ENCODE measurements at regions of chr12 and their contacts with region 1.

Region 1: GRCh38 chr12:74111688-74112360 is 425.8 kb upstream of the ATXN7L3B start:
- DNase-seq: peak; percentile 63
- H3K4me3 Mint-ChIP-seq: no peak overlapping the region
- H3K27ac Mint-ChIP-seq: no peak overlapping the region
- H3K4me1 Mint-ChIP-seq: peaks cover 7% of the 10 kb centered on the region
- H3K27me3 Mint-ChIP-seq: no peaks in the 10 kb centered on the region
- CTCF ChIP-seq: peak; percentile 37

Region 2: GRCh38 chr12:74317078-74317601 is 205.3 kb after region 1 on chr12:
- CTCF ChIA-PET with region 1: interaction called, 5 read pairs
- POLR2A ChIA-PET with region 1: no interaction called
- intact Hi-C with region 1: loop called (anchors 2 kb)
- DNase-seq: peak; percentile 62
- H3K4me3 Mint-ChIP-seq: no peak overlapping the region
- H3K27ac Mint-ChIP-seq: no peak overlapping the region
- H3K4me1 Mint-ChIP-seq: peaks cover 14% of the 10 kb centered on the region
- H3K27me3 Mint-ChIP-seq: no peaks in the 10 kb centered on the region
- CTCF ChIP-seq: peak; percentile 52

Region 3: GRCh38 chr12:74537707-74538385 is 426.0 kb after region 1 on chr12 and contains the start of gene ATXN7L3B:
- CTCF ChIA-PET with region 1: no interaction called
- POLR2A ChIA-PET with region 1: no interaction called
- intact Hi-C with region 1: loop called (anchors 1 kb)
- DNase-seq: peak; percentile 95
- H3K4me3 Mint-ChIP-seq: peak within 1 kb of the TSS; percentile 97
- H3K27ac Mint-ChIP-seq: peak within 1 kb of the TSS; percentile 100
- H3K4me1 Mint-ChIP-seq: peaks cover 34% of the 10 kb centered on the region
- H3K27me3 Mint-ChIP-seq: no peaks in the 10 kb centered on the region
- CTCF ChIP-seq: no peak
- total RNA-seq, gene ATXN7L3B: 21.1 and 28.2 TPM in 2 replicates

Region 4: GRCh38 chr12:74646831-74647230 is 535.0 kb after region 1 on chr12:
- CTCF ChIA-PET with region 1: interaction called, 3 read pairs
- POLR2A ChIA-PET with region 1: no interaction called
- intact Hi-C with region 1: loop called (anchors 10 kb)
- DNase-seq: peak; percentile 51
- H3K4me3 Mint-ChIP-seq: no peak overlapping the region
- H3K27ac Mint-ChIP-seq: no peak overlapping the region
- H3K4me1 Mint-ChIP-seq: no peaks in the 10 kb centered on the region
- H3K27me3 Mint-ChIP-seq: no peaks in the 10 kb centered on the region
- CTCF ChIP-seq: peak; percentile 29